B cell (primary cell): ENCODE measurements at regions of chr1 and their contacts with region 1.

Region 1: DNA sequence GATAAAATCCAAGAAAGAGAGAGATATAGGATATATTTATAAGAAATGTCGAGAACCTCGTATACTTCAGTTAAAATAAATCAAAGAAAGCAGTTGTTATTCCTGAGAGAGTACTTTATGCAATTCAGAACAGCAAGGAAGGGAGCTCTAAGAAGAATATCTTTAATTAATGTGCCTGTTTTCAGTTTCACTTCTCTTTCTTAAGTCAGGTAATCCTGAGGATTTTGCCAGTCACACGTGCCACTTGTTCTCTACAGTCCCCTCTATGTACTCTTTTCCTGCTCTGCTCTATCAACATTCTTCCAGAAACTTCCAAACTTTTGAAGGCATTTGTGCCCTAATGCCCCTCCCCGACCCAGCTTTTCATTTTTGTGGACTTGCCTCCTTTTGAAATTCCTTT is 211.9 kb downstream of the AKT3 start:
- DNase-seq: peak; percentile 32
- ATAC-seq: no peak
- H3K4me3 ChIP-seq: no peak overlapping the region
- H3K4me3 Mint-ChIP-seq: peak overlapping the region; percentile 26
- H3K27ac ChIP-seq: no peak overlapping the region
- H3K27ac Mint-ChIP-seq: no peak overlapping the region
- H3K4me1 ChIP-seq: peaks cover 7 to 9% of the 10 kb centered on the region in 2 donors
- H3K4me1 Mint-ChIP-seq: peaks cover 7% of the 10 kb centered on the region
- H3K27me3 ChIP-seq: no peaks in the 10 kb centered on the region
- H3K27me3 Mint-ChIP-seq: no peaks in the 10 kb centered on the region
- CTCF ChIP-seq: no peak

Region 2: GRCh38 chr1:243482141-243483022 is 155.8 kb before region 1 on chr1:
- CTCF ChIA-PET with region 1: no interaction called
- POLR2A ChIA-PET with region 1: interaction called, 11 read pairs
- intact Hi-C with region 1: no loop called
- DNase-seq: no peak
- ATAC-seq: peak; percentile 14
- H3K4me3 ChIP-seq: peak overlapping the region in 4 of 5 experiments; percentile 37 to 75 (median 48)
- H3K4me3 Mint-ChIP-seq: peak overlapping the region; percentile 84
- H3K27ac ChIP-seq: peak overlapping the region in 1 of 2 donors; percentile 37
- H3K27ac Mint-ChIP-seq: no peak overlapping the region
- H3K4me1 ChIP-seq: peaks cover 9 to 12% of the 10 kb centered on the region in 2 donors
- H3K4me1 Mint-ChIP-seq: peaks cover 21% of the 10 kb centered on the region
- H3K27me3 ChIP-seq: peaks cover 0 to 12% (median 0%) of the 10 kb centered on the region in 4 experiments
- H3K27me3 Mint-ChIP-seq: peaks cover 4% of the 10 kb centered on the region
- CTCF ChIP-seq: no peak